GM13976 (cell line): ENCODE measurements at regions of chr2 and their contacts with region 1.

Region 1: DNA sequence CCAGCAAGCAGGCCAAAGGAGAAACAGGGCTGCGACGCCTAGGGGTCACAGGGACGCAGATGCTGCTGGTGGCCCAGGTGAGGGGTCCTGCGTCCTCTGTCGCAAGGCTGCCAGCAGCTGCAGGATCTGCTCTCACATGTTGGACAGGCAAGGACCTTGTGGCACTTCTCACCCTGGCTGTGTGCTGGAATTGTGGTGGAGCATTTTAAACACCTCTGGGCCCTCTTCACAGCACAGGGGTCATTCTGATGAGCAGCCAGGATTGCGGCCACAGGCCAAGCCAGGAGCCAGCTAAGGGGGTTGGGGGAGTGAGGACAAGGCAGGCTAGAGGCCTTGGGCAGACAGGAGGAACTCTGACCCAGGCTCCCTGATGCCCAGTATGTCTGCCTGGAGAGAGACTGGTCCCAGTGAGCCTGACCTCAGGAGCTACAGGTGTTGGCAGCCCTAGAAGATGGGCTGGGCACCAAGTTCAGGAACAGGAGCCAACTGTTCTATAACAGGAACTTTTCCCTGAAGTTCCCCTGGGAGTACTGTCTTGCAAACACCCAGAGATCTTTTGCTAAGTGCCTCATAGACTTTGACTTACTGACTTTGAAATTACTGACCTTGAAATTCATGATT is 40.2 kb downstream of the EFR3B start:
- DNase-seq: no peak
- CTCF ChIP-seq: no peak

Region 2: DNA sequence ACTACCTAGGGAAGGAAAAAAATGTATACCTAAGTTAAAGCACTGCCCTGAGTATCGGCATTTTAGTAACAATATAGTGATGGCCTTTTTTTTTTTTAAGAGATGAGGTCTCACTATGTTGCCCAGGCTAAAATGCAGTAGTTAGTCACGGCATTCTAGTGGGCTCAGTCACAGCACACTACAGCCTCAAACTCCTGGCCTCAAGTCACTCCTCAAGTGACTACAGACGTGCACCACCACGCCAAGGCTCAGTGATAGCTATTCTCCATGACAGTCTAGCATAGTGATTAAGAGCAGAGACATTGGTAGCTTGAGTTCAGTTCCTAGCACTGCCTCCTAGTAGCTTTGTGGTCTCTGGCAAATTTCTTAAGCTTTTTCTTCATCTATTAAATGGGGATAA is 1114.3 kb before region 1 on chr2:
- in situ Hi-C with region 1: no loop called
- DNase-seq: no peak
- CTCF ChIP-seq: no peak

Region 3: GRCh38 chr2:24721470-24721869 is 360.6 kb before region 1 on chr2:
- in situ Hi-C with region 1: no loop called
- DNase-seq: no peak
- CTCF ChIP-seq: no peak

Region 4: DNA sequence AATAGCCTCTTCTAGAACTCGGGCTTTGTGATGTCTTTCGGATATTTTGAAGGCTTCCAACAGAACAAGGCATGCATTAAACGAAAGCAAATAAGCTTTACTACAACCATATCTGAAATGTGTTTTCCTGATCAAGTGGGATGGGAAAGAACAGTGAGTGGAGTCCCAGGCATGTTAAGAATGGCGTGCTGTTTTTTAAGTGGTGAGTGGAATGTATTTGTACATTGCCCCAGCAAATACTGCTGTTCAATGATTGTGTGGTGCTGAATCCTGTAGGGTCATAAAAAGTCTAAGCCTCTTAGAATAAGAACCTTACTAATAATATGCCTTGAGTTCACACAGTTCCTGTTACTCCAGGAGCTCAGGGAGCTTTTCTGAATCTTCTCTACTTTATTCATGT is 33.8 kb after region 1 on chr2:
- in situ Hi-C with region 1: loop called (anchors 5 kb)
- DNase-seq: no peak
- CTCF ChIP-seq: no peak